ENCODE measurements at regions of chr2 and their contacts with region 1.

Region 1: GRCh38 chr2:197268786-197269584 is 41.6 kb downstream of the ANKRD44 start:
- DNase-seq: peak in 4 of 14 experiments; percentile 36 to 74 (median 64)
- ATAC-seq: peak; percentile 66
- H3K4me3 ChIP-seq: no peak overlapping the region
- H3K4me3 Mint-ChIP-seq: peak overlapping the region; percentile 35
- H3K27ac ChIP-seq: peak overlapping the region; percentile 52 to 63
- H3K27ac Mint-ChIP-seq: peak overlapping the region; percentile 78
- H3K4me1 ChIP-seq: peaks cover 80% of the 10 kb centered on the region
- H3K4me1 Mint-ChIP-seq: peaks cover 89% of the 10 kb centered on the region
- H3K27me3 ChIP-seq: no peaks in the 10 kb centered on the region
- H3K27me3 Mint-ChIP-seq: no peaks in the 10 kb centered on the region
- CTCF ChIP-seq: no peak

Region 2: DNA sequence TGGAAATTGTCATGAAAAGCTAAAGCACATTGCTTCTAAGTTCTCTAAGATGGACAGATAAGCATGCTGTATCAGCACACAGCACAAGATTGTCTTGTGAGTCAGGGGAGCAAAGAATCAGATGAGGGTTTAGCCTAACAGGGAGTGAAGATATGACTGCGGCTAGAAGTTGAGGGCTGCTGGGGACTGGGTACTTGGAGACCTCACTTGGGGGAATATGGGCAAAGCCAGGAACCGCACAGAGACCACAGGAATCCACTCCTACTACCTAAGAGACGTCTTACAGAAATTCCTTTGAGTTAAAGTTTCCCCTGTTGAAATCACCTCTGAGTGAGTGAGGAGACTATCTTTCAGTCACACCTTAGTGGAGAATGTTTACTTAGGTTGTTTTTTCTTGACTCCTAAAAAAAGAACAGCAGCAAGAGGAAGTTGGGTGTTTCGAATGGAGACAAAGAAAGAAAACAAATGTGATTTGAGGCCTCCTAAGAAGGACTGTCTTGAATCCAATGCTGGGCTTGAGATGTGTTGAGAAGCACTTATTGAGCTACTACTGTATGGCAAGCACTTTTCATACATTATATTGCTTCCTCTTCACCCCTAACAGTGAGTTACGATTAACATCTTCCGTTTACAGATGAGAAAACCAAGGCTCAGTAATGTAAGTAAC is 59.1 kb before region 1 on chr2:
- CTCF ChIA-PET with region 1: interaction called, 4 read pairs
- POLR2A ChIA-PET with region 1: interaction called, 29 read pairs
- intact Hi-C with region 1: no loop called
- DNase-seq: peak in 7 of 14 experiments; percentile 25 to 79 (median 45)
- ATAC-seq: peak; percentile 8
- H3K4me3 ChIP-seq: peak overlapping the region; percentile 15
- H3K4me3 Mint-ChIP-seq: peak overlapping the region; percentile 73
- H3K27ac ChIP-seq: peak overlapping the region; percentile 79 to 86
- H3K27ac Mint-ChIP-seq: peak overlapping the region; percentile 98
- H3K4me1 ChIP-seq: peaks cover 86% of the 10 kb centered on the region
- H3K4me1 Mint-ChIP-seq: peaks cover 98% of the 10 kb centered on the region
- H3K27me3 ChIP-seq: no peaks in the 10 kb centered on the region
- H3K27me3 Mint-ChIP-seq: no peaks in the 10 kb centered on the region
- CTCF ChIP-seq: no peak

Region 3: GRCh38 chr2:197255543-197255942 is 13.4 kb before region 1 on chr2:
- CTCF ChIA-PET with region 1: interaction called, 4 read pairs
- POLR2A ChIA-PET with region 1: interaction called, 39 read pairs
- intact Hi-C with region 1: loop called in 1 of 2 experiments (anchors 2 kb)
- DNase-seq: peak; percentile 36 to 93 (median 56)
- ATAC-seq: peak; percentile 82
- H3K4me3 ChIP-seq: peak overlapping the region; percentile 13
- H3K4me3 Mint-ChIP-seq: peak overlapping the region; percentile 75
- H3K27ac ChIP-seq: peak overlapping the region; percentile 76 to 85
- H3K27ac Mint-ChIP-seq: peak overlapping the region; percentile 94
- H3K4me1 ChIP-seq: peaks cover 50% of the 10 kb centered on the region
- H3K4me1 Mint-ChIP-seq: peaks cover 89% of the 10 kb centered on the region
- H3K27me3 ChIP-seq: no peaks in the 10 kb centered on the region
- H3K27me3 Mint-ChIP-seq: no peaks in the 10 kb centered on the region
- CTCF ChIP-seq: no peak

Region 4: GRCh38 chr2:197279997-197280746 is 11.2 kb after region 1 on chr2:
- CTCF ChIA-PET with region 1: interaction called, 3 read pairs
- POLR2A ChIA-PET with region 1: interaction called, 10 read pairs
- intact Hi-C with region 1: loop called in 1 of 2 experiments (anchors 2 kb)
- DNase-seq: no peak
- ATAC-seq: peak; percentile 67
- H3K4me3 ChIP-seq: no peak overlapping the region
- H3K4me3 Mint-ChIP-seq: peak overlapping the region; percentile 30
- H3K27ac ChIP-seq: peak overlapping the region; percentile 33 to 46
- H3K27ac Mint-ChIP-seq: peak overlapping the region; percentile 80
- H3K4me1 ChIP-seq: peaks cover 83% of the 10 kb centered on the region
- H3K4me1 Mint-ChIP-seq: peaks cover 86% of the 10 kb centered on the region
- H3K27me3 ChIP-seq: no peaks in the 10 kb centered on the region
- H3K27me3 Mint-ChIP-seq: no peaks in the 10 kb centered on the region
- CTCF ChIP-seq: no peak

Region 5: DNA sequence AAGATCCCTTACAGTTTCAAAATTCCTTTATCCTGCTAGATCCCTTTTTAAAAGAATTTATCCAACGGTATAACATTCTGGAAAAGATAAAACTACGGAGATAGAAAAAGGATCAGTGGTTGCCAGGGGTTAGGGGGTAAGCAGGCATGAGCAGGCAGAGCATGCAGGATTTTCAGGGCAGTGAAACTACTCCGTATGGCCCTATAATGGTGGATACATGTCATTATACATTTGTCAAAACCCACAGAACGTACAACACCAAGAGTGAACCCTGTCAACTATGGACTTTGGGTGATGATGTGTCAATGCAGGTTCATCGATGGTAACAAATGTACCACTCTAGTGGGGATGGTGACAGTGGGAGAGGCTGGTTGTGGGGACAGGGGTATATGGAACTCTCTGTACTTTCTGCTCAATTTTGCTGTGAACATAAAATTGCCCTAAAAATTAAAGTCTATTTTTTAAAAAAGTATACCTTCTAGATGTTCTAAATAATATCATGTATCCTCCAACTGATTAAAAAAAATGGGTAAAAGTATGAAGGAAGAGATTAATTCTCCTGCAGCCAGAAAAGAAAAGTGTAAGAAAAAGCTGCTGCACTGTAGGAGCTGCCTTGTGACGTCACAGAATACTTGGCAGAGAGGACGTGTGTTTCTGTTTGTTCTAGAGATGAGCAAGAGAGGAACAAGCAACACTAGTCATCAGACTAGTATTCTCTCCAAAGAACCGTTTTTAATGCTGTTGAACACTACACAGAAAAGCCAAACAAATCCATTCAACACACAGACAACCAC is 18.0 kb after region 1 on chr2:
- CTCF ChIA-PET with region 1: no interaction called
- POLR2A ChIA-PET with region 1: interaction called, 10 read pairs
- intact Hi-C with region 1: loop called in 1 of 2 experiments (anchors 2 kb)
- DNase-seq: peak in 7 of 14 experiments; percentile 25 to 88 (median 61)
- ATAC-seq: peak; percentile 96
- H3K4me3 ChIP-seq: no peak overlapping the region
- H3K4me3 Mint-ChIP-seq: peak overlapping the region; percentile 84
- H3K27ac ChIP-seq: peak overlapping the region; percentile 43 to 60
- H3K27ac Mint-ChIP-seq: peak overlapping the region; percentile 86
- H3K4me1 ChIP-seq: peaks cover 70% of the 10 kb centered on the region
- H3K4me1 Mint-ChIP-seq: peaks cover 85% of the 10 kb centered on the region
- H3K27me3 ChIP-seq: no peaks in the 10 kb centered on the region
- H3K27me3 Mint-ChIP-seq: no peaks in the 10 kb centered on the region
- CTCF ChIP-seq: no peak

Region 6: GRCh38 chr2:197293252-197294007 is 24.4 kb after region 1 on chr2:
- CTCF ChIA-PET with region 1: no interaction called
- POLR2A ChIA-PET with region 1: interaction called, 8 read pairs
- intact Hi-C with region 1: loop called (anchors 2 kb)
- DNase-seq: peak in 5 of 14 experiments; percentile 16 to 75 (median 55)
- ATAC-seq: peak; percentile 74
- H3K4me3 ChIP-seq: peak overlapping the region; percentile 28
- H3K4me3 Mint-ChIP-seq: peak overlapping the region; percentile 64
- H3K27ac ChIP-seq: peak overlapping the region; percentile 70 to 78
- H3K27ac Mint-ChIP-seq: peak overlapping the region; percentile 95
- H3K4me1 ChIP-seq: peaks cover 59% of the 10 kb centered on the region
- H3K4me1 Mint-ChIP-seq: peaks cover 92% of the 10 kb centered on the region
- H3K27me3 ChIP-seq: no peaks in the 10 kb centered on the region
- H3K27me3 Mint-ChIP-seq: no peaks in the 10 kb centered on the region
- CTCF ChIP-seq: no peak

Measured in CD4-positive, alpha-beta T cell (primary cell).